ENCODE measurements at regions of chr14 and their contacts with region 1.

Region 1: GRCh38 chr14:49862089-49862673 is 9.6 kb upstream of the NEMF start:
- DNase-seq: peak; percentile 88
- ATAC-seq: peak; percentile 21
- H3K4me3 ChIP-seq: peak overlapping the region; percentile 73
- H3K27ac ChIP-seq: peak overlapping the region; percentile 66
- H3K4me1 ChIP-seq: peaks cover 20% of the 10 kb centered on the region
- H3K27me3 ChIP-seq: no peaks in the 10 kb centered on the region
- CTCF ChIP-seq: peak; percentile 100

Region 2: DNA sequence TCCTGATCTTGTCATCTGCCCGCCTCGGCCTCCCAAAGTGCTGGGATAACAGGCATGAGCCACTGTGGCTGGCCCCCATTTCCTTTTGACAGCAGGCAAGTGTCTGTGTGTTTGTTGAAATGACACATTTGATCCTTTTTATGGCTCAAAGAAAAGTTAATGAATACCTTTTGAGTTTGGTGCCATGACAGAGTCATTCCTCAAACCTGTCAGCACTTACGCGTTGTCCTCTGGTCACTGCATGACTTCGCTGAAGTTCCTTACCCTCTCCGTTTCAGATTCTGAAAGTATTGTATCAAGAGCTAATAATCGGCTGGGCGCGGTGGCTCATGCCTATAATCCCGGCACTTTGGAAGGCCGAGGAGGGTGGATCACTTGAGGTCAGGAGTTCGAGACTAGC is 42.0 kb before region 1 on chr14:
- CTCF ChIA-PET with region 1: no interaction called
- POLR2A ChIA-PET with region 1: no interaction called
- intact Hi-C with region 1: no loop called
- DNase-seq: no peak
- ATAC-seq: no peak
- H3K4me3 ChIP-seq: no peak overlapping the region
- H3K27ac ChIP-seq: no peak overlapping the region
- H3K4me1 ChIP-seq: no peaks in the 10 kb centered on the region
- H3K27me3 ChIP-seq: no peaks in the 10 kb centered on the region
- CTCF ChIP-seq: no peak

Region 3: GRCh38 chr14:49908432-49908781 is 46.2 kb after region 1 on chr14:
- CTCF ChIA-PET with region 1: interaction called, 8 read pairs
- POLR2A ChIA-PET with region 1: interaction called, 6 read pairs
- intact Hi-C with region 1: loop called (anchors 1 kb)
- DNase-seq: peak; percentile 93
- ATAC-seq: peak; percentile 42
- H3K4me3 ChIP-seq: peak overlapping the region; percentile 33; the same call in 1 of the 2 replicates
- H3K27ac ChIP-seq: peak overlapping the region; percentile 85
- H3K4me1 ChIP-seq: peaks cover 59% of the 10 kb centered on the region
- H3K27me3 ChIP-seq: no peaks in the 10 kb centered on the region
- CTCF ChIP-seq: no peak

Region 4: GRCh38 chr14:49971156-49972130 is 109.3 kb after region 1 on chr14:
- CTCF ChIA-PET with region 1: interaction called, 6 read pairs
- POLR2A ChIA-PET with region 1: no interaction called
- intact Hi-C with region 1: loop called (anchors 2 kb)
- DNase-seq: peak; percentile 43
- ATAC-seq: peak; percentile 0
- H3K4me3 ChIP-seq: peak overlapping the region; percentile 38
- H3K27ac ChIP-seq: peak overlapping the region; percentile 95
- H3K4me1 ChIP-seq: peaks cover 79% of the 10 kb centered on the region
- H3K27me3 ChIP-seq: no peaks in the 10 kb centered on the region
- CTCF ChIP-seq: no peak

Region 5: GRCh38 chr14:50045039-50045711 is 183.0 kb after region 1 on chr14:
- CTCF ChIA-PET with region 1: interaction called, 4 read pairs
- POLR2A ChIA-PET with region 1: interaction called, 5 read pairs
- intact Hi-C with region 1: loop called (anchors 1 kb)
- DNase-seq: peak; percentile 97
- ATAC-seq: peak; percentile 89
- H3K4me3 ChIP-seq: no peak overlapping the region
- H3K27ac ChIP-seq: peak overlapping the region; percentile 97
- H3K4me1 ChIP-seq: peaks cover 59% of the 10 kb centered on the region
- H3K27me3 ChIP-seq: no peaks in the 10 kb centered on the region
- CTCF ChIP-seq: peak; percentile 31; the same call in 1 of the 2 replicates

Region 6: GRCh38 chr14:50109342-50109741 is 247.2 kb after region 1 on chr14:
- CTCF ChIA-PET with region 1: interaction called, 12 read pairs
- POLR2A ChIA-PET with region 1: interaction called, 3 read pairs
- intact Hi-C with region 1: loop called (anchors 1 kb)
- DNase-seq: peak; percentile 38
- ATAC-seq: peak; percentile 16; the same call in 1 of the 2 replicates
- H3K4me3 ChIP-seq: no peak overlapping the region
- H3K27ac ChIP-seq: no peak overlapping the region
- H3K4me1 ChIP-seq: peaks cover 10% of the 10 kb centered on the region
- H3K27me3 ChIP-seq: no peaks in the 10 kb centered on the region
- CTCF ChIP-seq: peak; percentile 62

Region 7: GRCh38 chr14:50231475-50232275 is 369.5 kb after region 1 on chr14 and contains the start of gene SOS2:
- CTCF ChIA-PET with region 1: no interaction called
- POLR2A ChIA-PET with region 1: no interaction called
- intact Hi-C with region 1: loop called (anchors 2 kb)
- DNase-seq: peak; percentile 78
- ATAC-seq: peak; percentile 83
- H3K4me3 ChIP-seq: peak within 1 kb of the TSS; percentile 93
- H3K27ac ChIP-seq: peak within 1 kb of the TSS; percentile 18
- H3K4me1 ChIP-seq: peaks cover 34% of the 10 kb centered on the region
- H3K27me3 ChIP-seq: no peaks in the 10 kb centered on the region
- CTCF ChIP-seq: 0 out of 2 replicates have a peak, but pooled peaks have one; percentile 11
- total RNA-seq, gene SOS2: 9.1 and 9.9 TPM in 2 replicates